Vagina (tissue), 2 donors: ENCODE measurements at regions of chr10 and their contacts with region 1.

Region 1: GRCh38 chr10:76558586-76558985 is 1079.0 kb downstream of the KCNMA1 start:
- DNase-seq: no peak
- H3K4me3 ChIP-seq: no peak overlapping the region
- H3K27ac ChIP-seq: peak overlapping the region; percentile 24
- H3K4me1 ChIP-seq: peaks cover 49% of the 10 kb centered on the region
- H3K27me3 ChIP-seq: no peaks in the 10 kb centered on the region
- CTCF ChIP-seq: no peak
- POLR2A ChIP-seq: no peak

Region 2: GRCh38 chr10:76998451-76998850 is 439.9 kb after region 1 on chr10:
- intact Hi-C with region 1: loop called (anchors 10 kb)
- DNase-seq: no peak
- H3K4me3 ChIP-seq: no peak overlapping the region
- H3K27ac ChIP-seq: no peak overlapping the region
- H3K4me1 ChIP-seq: peaks cover 7% of the 10 kb centered on the region
- H3K27me3 ChIP-seq: no peaks in the 10 kb centered on the region
- CTCF ChIP-seq: no peak
- POLR2A ChIP-seq: no peak

Region 3: GRCh38 chr10:77463967-77464745 is 905.6 kb after region 1 on chr10:
- intact Hi-C with region 1: no loop called
- DNase-seq: no peak
- H3K4me3 ChIP-seq: no peak overlapping the region
- H3K27ac ChIP-seq: no peak overlapping the region
- H3K4me1 ChIP-seq: no peaks in the 10 kb centered on the region
- H3K27me3 ChIP-seq: no peaks in the 10 kb centered on the region
- CTCF ChIP-seq: no peak
- POLR2A ChIP-seq: no peak